ENCODE measurements at regions of chr21 and their contacts with region 1.

Region 1: GRCh38 chr21:20030390-20030789 is 967.8 kb upstream of the NCAM2 start:
- DNase-seq: peak in 1 of 2 donors; percentile 38
- ATAC-seq: peak; percentile 29 to 90 (median 66)
- H3K4me3 ChIP-seq: no peak overlapping the region
- H3K27ac ChIP-seq: no peak overlapping the region
- H3K4me1 ChIP-seq: no peaks in the 10 kb centered on the region
- H3K27me3 ChIP-seq: no peaks in the 10 kb centered on the region
- CTCF ChIP-seq: no peak

Region 2: GRCh38 chr21:18951271-18952065 is 1078.9 kb before region 1 on chr21:
- intact Hi-C with region 1: loop called in 1 of 10 experiments (anchors 10 kb)
- DNase-seq: no peak
- ATAC-seq: peak in 3 of 8 donors; percentile 39 to 62 (median 50)
- H3K4me3 ChIP-seq: no peak overlapping the region
- H3K27ac ChIP-seq: no peak overlapping the region
- H3K4me1 ChIP-seq: no peaks in the 10 kb centered on the region
- H3K27me3 ChIP-seq: no peaks in the 10 kb centered on the region
- CTCF ChIP-seq: peak in 8 of 9 donors; percentile 14 to 51 (median 46)

Region 3: GRCh38 chr21:20108016-20108415 is 77.6 kb after region 1 on chr21:
- intact Hi-C with region 1: no loop called
- DNase-seq: no peak
- ATAC-seq: no peak
- H3K4me3 ChIP-seq: no peak overlapping the region
- H3K27ac ChIP-seq: no peak overlapping the region
- H3K4me1 ChIP-seq: no peaks in the 10 kb centered on the region
- H3K27me3 ChIP-seq: no peaks in the 10 kb centered on the region
- CTCF ChIP-seq: no peak